ENCODE measurements at regions of chr17 and their contacts with region 1.

Region 1: GRCh38 chr17:40168262-40168832 is 8.9 kb upstream of the RAPGEFL1 start:
- DNase-seq: peak; percentile 77
- ATAC-seq: peak; percentile 76 to 83
- H3K4me3 ChIP-seq: no peak overlapping the region
- H3K27ac ChIP-seq: 0 out of 6 replicates have a peak overlapping the region, but pooled peaks of 1 of the 2 experiments have one; percentile 18
- H3K4me1 ChIP-seq: peaks cover 4% of the 10 kb centered on the region; the same call in 2 of the 3 replicates
- CTCF ChIP-seq: peak; percentile 84
- EP300 ChIP-seq: no peak
- POLR2A ChIP-seq: no peak
- RAD21 ChIP-seq: peak; percentile 79 to 81

Region 2: DNA sequence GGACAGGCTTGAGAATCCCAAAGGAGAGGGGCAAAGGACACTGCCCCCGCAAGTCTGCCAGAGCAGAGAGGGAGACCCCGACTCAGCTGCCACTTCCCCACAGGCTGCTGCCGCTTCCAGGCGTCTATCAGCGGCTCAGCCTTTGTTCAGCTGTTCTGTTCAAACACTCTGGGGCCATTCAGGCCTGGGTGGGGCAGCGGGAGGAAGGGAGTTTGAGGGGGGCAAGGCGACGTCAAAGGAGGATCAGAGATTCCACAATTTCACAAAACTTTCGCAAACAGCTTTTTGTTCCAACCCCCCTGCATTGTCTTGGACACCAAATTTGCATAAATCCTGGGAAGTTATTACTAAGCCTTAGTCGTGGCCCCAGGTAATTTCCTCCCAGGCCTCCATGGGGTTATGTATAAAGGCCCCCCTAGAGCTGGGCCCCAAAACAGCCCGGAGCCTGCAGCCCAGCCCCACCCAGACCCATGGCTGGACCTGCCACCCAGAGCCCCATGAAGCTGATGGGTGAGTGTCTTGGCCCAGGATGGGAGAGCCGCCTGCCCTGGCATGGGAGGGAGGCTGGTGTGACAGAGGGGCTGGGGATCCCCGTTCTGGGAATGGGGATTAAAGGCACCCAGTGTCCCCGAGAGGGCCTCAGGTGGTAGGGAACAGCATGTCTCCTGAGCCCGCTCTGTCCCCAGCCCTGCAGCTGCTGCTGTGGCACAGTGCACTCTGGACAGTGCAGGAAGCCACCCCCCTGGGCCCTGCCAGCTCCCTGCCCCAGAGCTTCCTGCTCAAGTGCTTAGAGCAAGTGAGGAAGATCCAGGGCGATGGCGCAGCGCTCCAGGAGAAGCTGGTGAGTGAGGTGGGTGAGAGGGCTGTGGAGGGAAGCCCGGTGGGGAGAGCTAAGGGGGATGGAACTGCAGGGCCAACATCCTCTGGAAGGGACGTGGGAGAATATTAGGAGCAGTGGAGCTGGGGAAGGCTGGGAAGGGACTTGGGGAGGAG is 153.0 kb before region 1 on chr17 and contains the start of gene CSF3:
- CTCF ChIA-PET with region 1: interaction called, 38 read pairs
- POLR2A ChIA-PET with region 1: no interaction called
- DNase-seq: no peak
- ATAC-seq: 0 out of 6 replicates have a peak, but pooled peaks have one; percentile 1 to 4
- H3K4me3 ChIP-seq: no peak within 1 kb of the TSS
- H3K27ac ChIP-seq: peak within 1 kb of the TSS; percentile 42 to 46; a peak in 3 of 6 replicates
- H3K4me1 ChIP-seq: peaks cover 17% of the 10 kb centered on the region; the same call in 2 of the 3 replicates
- CTCF ChIP-seq: no peak
- EP300 ChIP-seq: no peak
- POLR2A ChIP-seq: no peak
- RAD21 ChIP-seq: no peak
- polyA plus RNA-seq, gene CSF3: 0.41 TPM in 1 of 2 replicates, not detected in the other

Region 3: GRCh38 chr17:40038882-40039513 is 129.3 kb before region 1 on chr17:
- CTCF ChIA-PET with region 1: interaction called, 16 read pairs
- POLR2A ChIA-PET with region 1: no interaction called
- DNase-seq: peak; percentile 56 to 68
- ATAC-seq: peak; percentile 80 to 88
- H3K4me3 ChIP-seq: no peak overlapping the region
- H3K27ac ChIP-seq: peak overlapping the region in 1 of 2 experiments; percentile 25; a peak in 1 of 6 replicates
- H3K4me1 ChIP-seq: 0 out of 3 replicates have a peak, but pooled peaks cover 7% of the 10 kb centered on the region
- CTCF ChIP-seq: peak; percentile 67
- EP300 ChIP-seq: no peak
- POLR2A ChIP-seq: no peak
- RAD21 ChIP-seq: peak; percentile 54 to 63

Region 4: DNA sequence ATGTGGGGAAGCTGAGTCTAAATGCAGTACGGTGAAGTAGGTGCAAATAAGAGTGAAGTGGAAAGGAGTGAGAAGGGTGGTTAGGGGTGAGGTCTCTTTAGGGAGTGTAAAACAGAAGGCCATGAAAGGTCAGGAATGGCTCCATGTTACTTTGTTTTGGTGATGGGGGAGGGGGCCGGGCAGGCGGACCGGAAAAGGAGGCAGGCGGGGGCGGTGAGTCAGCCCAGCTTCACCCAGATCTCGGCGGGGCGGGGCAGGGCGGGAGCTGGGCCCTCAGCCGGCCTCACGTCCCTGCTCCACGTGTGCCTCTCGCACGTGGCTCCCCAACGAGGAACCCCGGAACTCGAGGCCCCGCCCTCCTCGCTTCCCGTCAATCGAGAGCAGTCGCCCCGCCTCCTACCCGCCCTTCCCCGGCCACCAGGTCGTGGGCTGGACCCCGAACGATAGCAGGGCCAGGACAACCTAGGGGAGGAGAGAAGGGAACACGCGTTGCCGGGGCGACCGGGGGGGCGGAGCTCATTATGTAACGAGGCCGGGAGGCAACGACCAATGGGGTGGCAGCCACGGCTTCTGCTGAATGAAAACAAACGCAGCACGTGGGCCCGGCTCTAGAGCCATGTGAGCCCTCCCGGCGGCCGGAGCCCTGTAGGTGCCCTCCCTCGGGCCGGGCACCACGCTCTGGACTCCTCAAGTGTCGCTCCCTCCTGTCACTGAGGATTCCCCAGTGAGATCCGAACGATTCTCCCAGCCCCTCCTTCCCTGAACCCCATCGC is 69.3 kb before region 1 on chr17:
- CTCF ChIA-PET with region 1: interaction called, 26 read pairs
- POLR2A ChIA-PET with region 1: interaction called, 6 read pairs
- DNase-seq: peak; percentile 99
- ATAC-seq: peak; percentile 58 to 66
- H3K4me3 ChIP-seq: peak overlapping the region; percentile 54
- H3K27ac ChIP-seq: peak overlapping the region; percentile 89
- H3K4me1 ChIP-seq: peaks cover 53% of the 10 kb centered on the region
- CTCF ChIP-seq: no peak
- EP300 ChIP-seq: peak in 1 of 2 experiments; percentile 53; a peak in 1 of 5 replicates
- POLR2A ChIP-seq: no peak
- RAD21 ChIP-seq: no peak; a peak in 1 of 5 replicates

Region 5: GRCh38 chr17:40121181-40122135 is 46.9 kb before region 1 on chr17 and contains the start of gene MSL1:
- CTCF ChIA-PET with region 1: interaction called, 17 read pairs
- POLR2A ChIA-PET with region 1: interaction called, 5 read pairs
- DNase-seq: peak; percentile 83 to 91
- ATAC-seq: peak; percentile 75 to 76
- H3K4me3 ChIP-seq: peak within 1 kb of the TSS; percentile 67
- H3K27ac ChIP-seq: peak within 1 kb of the TSS; percentile 94 to 100
- H3K4me1 ChIP-seq: peaks cover 24% of the 10 kb centered on the region
- CTCF ChIP-seq: no peak
- EP300 ChIP-seq: no peak
- POLR2A ChIP-seq: peak; percentile 46
- RAD21 ChIP-seq: no peak; a peak in 1 of 5 replicates
- polyA plus RNA-seq, gene MSL1: 87.8 and 95.1 TPM in 2 replicates

Region 6: GRCh38 chr17:40151414-40151963 is 16.9 kb before region 1 on chr17:
- CTCF ChIA-PET with region 1: interaction called, 76 read pairs
- POLR2A ChIA-PET with region 1: interaction called, 3 read pairs
- DNase-seq: no peak
- ATAC-seq: 0 out of 6 replicates have a peak, but pooled peaks of 1 of the 2 experiments have one; percentile 24
- H3K4me3 ChIP-seq: no peak overlapping the region
- H3K27ac ChIP-seq: no peak overlapping the region
- H3K4me1 ChIP-seq: peaks cover 5% of the 10 kb centered on the region; the same call in 1 of the 3 replicates
- CTCF ChIP-seq: no peak
- EP300 ChIP-seq: no peak
- POLR2A ChIP-seq: no peak
- RAD21 ChIP-seq: no peak

Region 7: DNA sequence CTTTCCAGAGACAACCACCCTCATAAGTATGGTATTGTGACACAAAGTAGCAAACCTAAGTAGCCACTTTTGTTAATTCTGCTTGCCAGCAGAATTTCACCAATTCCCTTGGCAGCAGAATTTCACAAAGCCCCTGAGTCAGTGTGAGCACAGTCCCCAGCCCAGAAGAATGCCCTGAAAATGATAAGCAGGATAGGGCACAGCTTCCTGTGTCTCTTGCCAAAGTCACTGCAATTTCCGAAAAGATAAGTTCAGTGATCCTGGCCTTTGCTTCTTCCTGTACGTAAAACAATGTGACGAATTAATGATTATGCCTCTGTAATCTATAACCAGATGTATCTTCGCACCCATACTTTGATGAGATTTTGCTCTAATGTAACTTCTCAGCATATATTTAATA is 34.8 kb after region 1 on chr17:
- CTCF ChIA-PET with region 1: interaction called, 11 read pairs
- POLR2A ChIA-PET with region 1: no interaction called
- DNase-seq: no peak
- ATAC-seq: no peak
- H3K4me3 ChIP-seq: no peak overlapping the region
- H3K27ac ChIP-seq: no peak overlapping the region
- H3K4me1 ChIP-seq: no peaks in the 10 kb centered on the region
- CTCF ChIP-seq: no peak
- EP300 ChIP-seq: no peak
- POLR2A ChIP-seq: no peak
- RAD21 ChIP-seq: no peak

Region 8: DNA sequence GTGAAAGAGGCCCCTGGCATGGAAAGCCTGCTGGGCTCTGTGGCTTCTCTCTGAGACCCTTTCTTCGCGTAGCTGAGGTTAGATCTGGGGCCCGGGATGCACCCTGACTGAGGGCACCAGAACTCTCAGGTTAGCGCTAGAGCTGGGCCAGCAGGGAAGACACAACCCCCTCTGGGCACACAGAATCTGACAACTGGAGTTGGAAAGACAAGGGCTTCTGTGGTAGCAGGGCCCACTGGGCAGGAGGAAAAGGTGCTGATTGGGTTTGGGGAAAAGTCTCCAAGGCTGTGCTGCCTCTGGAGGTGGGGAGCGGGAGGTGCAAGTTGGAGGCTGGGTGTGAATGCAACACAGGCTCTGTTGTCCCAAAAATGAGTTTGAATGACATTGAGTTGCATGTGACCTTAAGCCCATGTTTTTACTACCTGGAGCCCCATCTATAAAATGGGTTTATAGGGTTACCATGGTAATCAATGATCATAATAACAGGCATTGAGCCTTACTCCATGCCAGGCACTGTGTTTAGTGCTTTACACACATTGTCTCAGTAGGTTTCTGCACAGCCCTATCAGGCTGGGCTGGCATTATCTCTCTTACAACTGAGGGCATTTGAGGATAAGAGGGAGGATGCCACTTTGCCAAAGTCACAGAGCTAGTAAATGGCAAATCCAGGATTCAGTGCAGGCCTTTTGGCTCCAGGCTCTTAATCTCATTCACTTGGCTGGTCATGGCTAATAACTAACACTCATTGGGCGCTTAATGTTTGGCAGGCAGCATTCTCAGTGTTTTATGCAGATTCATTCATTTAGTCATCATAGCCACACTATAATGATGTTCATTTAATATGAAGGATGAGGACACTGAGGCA is 265.4 kb after region 1 on chr17:
- CTCF ChIA-PET with region 1: no interaction called
- POLR2A ChIA-PET with region 1: no interaction called
- DNase-seq: peak in 1 of 2 experiments; percentile 66
- ATAC-seq: peak; percentile 86 to 93
- H3K4me3 ChIP-seq: no peak overlapping the region
- H3K27ac ChIP-seq: peak overlapping the region in 1 of 2 experiments; percentile 25; a peak in 3 of 6 replicates
- H3K4me1 ChIP-seq: 0 out of 3 replicates have a peak, but pooled peaks cover 3% of the 10 kb centered on the region
- CTCF ChIP-seq: peak; percentile 33; the same call in 2 of the 3 replicates
- EP300 ChIP-seq: no peak
- POLR2A ChIP-seq: no peak
- RAD21 ChIP-seq: peak in 1 of 2 experiments; percentile 50; a peak in 3 of 5 replicates